Activated naive CD8-positive, alpha-beta T cell treated with anti-CD3 and anti-CD28 coated beads, Interleukin-2, amount 10 ng/mL, durations not matched to agents 7 days and 5 days (primary cell): ENCODE measurements at regions of chr14 and their contacts with region 1.

Region 1: DNA sequence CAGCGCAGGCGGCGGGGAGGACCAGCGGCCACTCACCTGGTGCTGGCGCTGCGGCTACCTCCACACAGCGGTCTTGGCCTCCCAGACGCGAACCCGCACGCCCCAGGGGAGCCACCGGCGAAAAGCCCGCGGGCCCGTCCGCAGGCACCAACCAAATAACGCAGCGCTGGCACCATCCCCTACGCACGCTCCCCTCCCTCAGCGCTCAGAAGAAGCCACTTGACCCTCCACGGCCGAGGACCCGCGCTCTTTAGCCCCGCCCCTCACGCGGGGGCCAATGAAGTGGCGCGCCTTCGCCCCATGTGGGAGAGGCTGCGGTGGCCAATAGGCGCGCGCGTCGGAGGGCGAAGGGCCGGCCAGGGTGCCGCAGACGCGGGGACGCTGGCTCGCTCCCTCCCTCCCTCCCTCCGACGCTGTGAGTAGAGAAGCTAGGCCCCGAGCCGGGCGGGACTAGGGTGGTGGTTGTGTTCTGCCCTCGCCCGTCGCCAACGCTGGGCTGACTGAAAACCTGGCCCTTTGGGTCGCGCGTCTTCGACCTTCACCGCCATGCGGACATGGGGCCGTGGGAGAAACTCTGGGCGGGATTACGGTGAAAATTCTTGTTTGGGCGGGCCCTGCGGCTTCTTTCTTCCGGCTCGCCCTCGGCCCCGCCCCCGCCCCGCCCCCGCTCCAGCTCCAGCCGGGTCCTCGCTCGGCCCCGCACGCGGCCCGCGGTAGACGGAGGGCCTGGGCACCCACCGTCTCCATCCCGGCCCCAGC is at the starts of genes DMAC2L and L2HGDH:
- DNase-seq: peak; percentile 94
- ATAC-seq: peak; percentile 90
- H3K4me3 Mint-ChIP-seq: peak within 1 kb of the TSS; percentile 92
- H3K27ac Mint-ChIP-seq: peak within 1 kb of the TSS; percentile 95
- H3K4me1 Mint-ChIP-seq: peaks cover 26% of the 10 kb centered on the region
- H3K27me3 Mint-ChIP-seq: no peaks in the 10 kb centered on the region
- total RNA-seq, gene DMAC2L: 19.0 to 19.4 TPM
- total RNA-seq, gene L2HGDH: 11.5 to 12.1 TPM

Region 2: GRCh38 chr14:50260511-50260910 is 51.6 kb before region 1 on chr14:
- POLR2A ChIA-PET with region 1: no interaction called
- DNase-seq: no peak
- ATAC-seq: peak; percentile 75
- H3K4me3 Mint-ChIP-seq: no peak overlapping the region
- H3K27ac Mint-ChIP-seq: no peak overlapping the region
- H3K4me1 Mint-ChIP-seq: peaks cover 1% of the 10 kb centered on the region
- H3K27me3 Mint-ChIP-seq: no peaks in the 10 kb centered on the region

Region 3: DNA sequence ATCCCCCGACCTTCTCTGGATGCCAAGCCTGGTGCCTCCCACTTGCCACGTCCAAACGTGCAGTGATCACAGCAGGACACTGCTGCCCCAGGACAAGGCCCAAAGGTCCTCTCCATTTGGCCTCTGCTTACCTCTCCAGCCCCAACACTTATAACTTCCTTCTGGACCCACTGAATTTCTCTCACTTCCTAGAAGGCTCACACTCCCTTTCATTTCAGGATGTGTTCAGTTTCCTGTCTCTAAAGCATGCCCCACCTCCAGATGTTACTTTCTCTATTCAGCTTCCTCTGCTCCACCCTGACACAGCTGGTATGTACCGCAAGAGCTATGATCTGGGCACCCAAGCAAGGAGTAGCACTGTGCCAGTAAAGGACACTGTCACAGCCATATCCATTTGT is 51.6 kb after region 1 on chr14:
- POLR2A ChIA-PET with region 1: interaction called, 13 read pairs
- DNase-seq: peak; percentile 44
- ATAC-seq: peak; percentile 96
- H3K4me3 Mint-ChIP-seq: peak overlapping the region; percentile 88
- H3K27ac Mint-ChIP-seq: peak overlapping the region; percentile 97
- H3K4me1 Mint-ChIP-seq: peaks cover 27% of the 10 kb centered on the region
- H3K27me3 Mint-ChIP-seq: no peaks in the 10 kb centered on the region